PC-3 (cell line): ENCODE measurements at regions of chr1 and their contacts with region 1.

Region 1: DNA sequence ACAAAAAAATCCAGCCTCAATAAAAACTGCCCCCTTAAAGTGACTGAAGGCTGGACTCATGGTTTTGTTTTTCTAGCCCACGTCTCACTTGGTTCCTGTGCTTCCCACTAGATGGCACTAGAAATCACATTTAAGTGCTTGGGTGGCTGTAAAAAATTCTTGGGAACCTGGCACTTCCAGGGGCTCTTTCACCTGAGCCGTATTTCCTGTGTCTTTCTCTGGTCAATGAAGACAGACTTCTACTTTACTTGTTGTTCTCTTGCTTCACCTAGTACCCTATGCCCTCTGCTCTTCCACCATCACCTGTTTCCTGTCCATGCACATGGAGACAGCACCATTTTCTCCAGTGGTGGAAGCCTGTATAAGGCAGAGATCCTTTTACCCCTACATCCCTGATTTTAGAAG is 20.0 kb downstream of the METTL13 start:
- DNase-seq: peak; percentile 88
- ATAC-seq: peak; percentile 74
- H3K4me3 ChIP-seq: no peak overlapping the region
- H3K27ac ChIP-seq: no peak overlapping the region
- H3K4me1 ChIP-seq: no peaks in the 10 kb centered on the region
- H3K27me3 ChIP-seq: no peaks in the 10 kb centered on the region
- CTCF ChIP-seq: peak; percentile 99

Region 2: GRCh38 chr1:171850651-171851350 is 49.3 kb after region 1 on chr1:
- CTCF ChIA-PET with region 1: interaction called, 20 read pairs
- POLR2A ChIA-PET with region 1: no interaction called
- intact Hi-C with region 1: loop called (anchors 2 kb)
- DNase-seq: peak; percentile 41
- ATAC-seq: peak; percentile 66
- H3K4me3 ChIP-seq: no peak overlapping the region
- H3K27ac ChIP-seq: no peak overlapping the region
- H3K4me1 ChIP-seq: no peaks in the 10 kb centered on the region
- H3K27me3 ChIP-seq: peaks cover 85% of the 10 kb centered on the region
- CTCF ChIP-seq: peak; percentile 47; the same call in 1 of the 2 replicates

Region 3: DNA sequence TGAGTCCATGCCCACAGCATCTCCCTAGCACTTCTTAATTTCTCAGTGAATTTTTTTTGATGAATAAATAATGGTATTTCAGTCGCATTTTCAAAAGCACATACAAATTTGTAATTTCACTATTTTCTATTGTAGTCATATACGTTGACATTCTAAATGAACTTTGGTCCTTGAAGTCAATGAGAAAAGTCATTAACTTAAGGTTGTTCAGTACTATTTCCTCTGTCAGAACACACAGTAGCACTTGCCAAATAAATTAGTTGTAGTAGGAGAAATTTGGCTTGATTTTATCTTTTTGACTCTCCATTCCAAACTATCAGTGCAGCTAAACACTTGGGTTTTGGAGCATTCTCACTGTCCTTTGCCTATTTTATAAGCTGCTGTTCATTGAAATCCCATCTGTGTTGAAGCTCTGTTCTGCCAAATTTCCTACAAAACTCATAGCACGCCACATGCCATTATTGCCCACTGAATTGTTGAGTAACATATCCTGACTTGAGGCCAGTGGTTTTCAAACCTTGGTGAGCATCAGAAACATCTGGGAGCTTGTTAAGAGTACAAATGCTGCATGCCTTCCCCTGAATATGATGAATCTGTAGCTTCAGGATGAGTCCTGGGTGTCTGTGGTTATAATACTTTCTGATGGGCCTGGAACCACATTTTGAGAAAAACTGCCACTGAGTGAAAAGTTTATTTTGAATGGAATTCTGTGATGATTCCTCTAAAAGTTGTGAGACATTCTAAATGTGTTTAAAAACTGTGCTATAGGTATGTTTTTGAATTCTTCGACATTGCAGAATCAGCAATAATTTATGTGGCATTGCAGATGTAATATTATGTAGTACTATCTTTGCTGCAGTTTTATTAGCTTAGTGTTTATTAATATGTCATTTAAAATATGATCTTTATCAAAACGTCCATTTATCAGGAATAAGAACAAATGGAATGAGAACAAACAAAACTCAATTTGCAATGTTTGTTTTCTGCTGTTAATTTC is 118.7 kb after region 1 on chr1:
- CTCF ChIA-PET with region 1: interaction called, 3 read pairs
- POLR2A ChIA-PET with region 1: no interaction called
- intact Hi-C with region 1: loop called (anchors 5 kb)
- DNase-seq: no peak
- ATAC-seq: no peak
- H3K4me3 ChIP-seq: no peak overlapping the region
- H3K27ac ChIP-seq: no peak overlapping the region
- H3K4me1 ChIP-seq: no peaks in the 10 kb centered on the region
- H3K27me3 ChIP-seq: peaks cover 74% of the 10 kb centered on the region
- CTCF ChIP-seq: no peak

Region 4: DNA sequence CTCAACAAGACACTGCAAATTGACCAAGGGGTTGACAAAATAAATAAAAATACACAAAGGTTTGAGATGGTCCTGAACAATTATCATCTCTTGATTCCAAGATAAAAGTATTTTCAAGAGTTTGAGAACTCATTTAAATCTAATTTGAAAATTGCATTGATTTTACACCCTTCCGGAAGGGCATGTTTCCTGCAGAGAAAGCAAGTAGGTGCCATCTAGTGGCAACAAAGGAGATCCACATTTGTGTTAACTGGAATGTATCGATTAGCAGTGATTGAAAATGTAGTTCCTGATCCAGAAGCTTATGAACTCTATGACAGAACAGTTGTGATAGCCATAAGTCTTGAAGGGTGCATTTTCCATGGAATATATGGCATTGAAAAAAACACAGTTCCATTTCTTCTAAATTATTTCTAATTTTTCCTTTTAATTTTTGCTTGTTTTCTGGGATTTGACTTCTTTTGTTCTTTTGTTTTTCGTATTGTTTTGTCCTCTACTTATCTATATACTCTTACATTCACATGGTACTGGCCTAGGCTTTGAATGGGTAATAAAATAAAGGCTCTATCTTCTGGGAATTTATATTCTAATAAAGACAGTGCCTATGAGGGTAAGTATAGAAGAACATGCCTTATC is 183.5 kb after region 1 on chr1:
- CTCF ChIA-PET with region 1: interaction called, 151 read pairs
- POLR2A ChIA-PET with region 1: interaction called, 7 read pairs
- intact Hi-C with region 1: loop called (anchors 1 kb)
- DNase-seq: peak; percentile 78
- ATAC-seq: peak; percentile 54
- H3K4me3 ChIP-seq: no peak overlapping the region
- H3K27ac ChIP-seq: no peak overlapping the region
- H3K4me1 ChIP-seq: no peaks in the 10 kb centered on the region
- H3K27me3 ChIP-seq: peaks cover 32% of the 10 kb centered on the region
- CTCF ChIP-seq: peak; percentile 99